Body of pancreas (tissue), 4 donors: ENCODE measurements at regions of chr3 and their contacts with region 1.

Region 1: GRCh38 chr3:150733373-150733935 is 29.5 kb downstream of the SIAH2 start:
- DNase-seq: no peak
- ATAC-seq: no peak
- H3K4me3 ChIP-seq: no peak overlapping the region
- H3K27ac ChIP-seq: no peak overlapping the region
- H3K4me1 ChIP-seq: peaks cover 24% of the 10 kb centered on the region
- H3K27me3 ChIP-seq: no peaks in the 10 kb centered on the region
- CTCF ChIP-seq: no peak
- POLR2A ChIP-seq: no peak

Region 2: DNA sequence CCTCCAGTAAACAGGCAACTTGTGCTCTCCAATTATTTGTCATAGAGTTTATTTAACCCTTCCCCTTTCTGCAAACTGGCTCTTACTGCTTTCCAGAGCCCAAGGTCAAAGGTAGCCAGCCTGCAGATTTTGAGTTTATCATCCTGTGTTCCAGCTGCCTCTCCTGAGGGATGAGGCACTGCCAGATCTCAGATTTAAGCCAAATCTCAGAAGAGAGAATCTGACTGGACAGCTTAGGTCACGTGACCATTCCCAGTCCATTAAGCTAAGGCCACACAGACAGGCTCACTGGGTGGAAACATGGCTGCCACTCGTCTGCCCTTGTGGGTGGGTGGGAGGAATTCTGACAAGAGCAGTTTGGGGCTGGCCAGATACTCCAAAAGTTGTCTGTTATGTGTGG is 38.1 kb after region 1 on chr3:
- intact Hi-C with region 1: loop called (anchors 5 kb)
- DNase-seq: no peak
- ATAC-seq: no peak
- H3K4me3 ChIP-seq: no peak overlapping the region
- H3K27ac ChIP-seq: no peak overlapping the region
- H3K4me1 ChIP-seq: peaks cover 7% of the 10 kb centered on the region
- H3K27me3 ChIP-seq: no peaks in the 10 kb centered on the region
- CTCF ChIP-seq: no peak
- POLR2A ChIP-seq: no peak

Region 3: DNA sequence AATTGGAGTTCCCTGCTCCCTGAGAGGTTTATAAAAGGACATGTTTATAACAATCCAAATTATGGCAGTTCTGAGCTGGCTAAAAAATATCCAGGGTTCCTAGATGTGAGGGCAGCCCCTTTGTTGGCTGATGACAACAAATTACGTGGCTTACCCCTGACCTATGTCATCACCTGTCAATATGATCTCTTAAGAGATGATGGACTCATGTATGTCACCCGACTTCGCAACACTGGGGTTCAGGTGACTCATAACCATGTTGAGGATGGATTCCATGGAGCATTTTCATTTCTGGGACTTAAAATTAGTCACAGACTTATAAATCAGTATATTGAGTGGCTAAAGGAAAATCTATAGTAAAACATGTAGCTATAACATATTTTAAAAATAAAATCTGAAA is 1094.4 kb after region 1 on chr3:
- intact Hi-C with region 1: no loop called
- DNase-seq: no peak
- ATAC-seq: no peak
- H3K4me3 ChIP-seq: no peak overlapping the region
- H3K27ac ChIP-seq: no peak overlapping the region
- H3K4me1 ChIP-seq: no peaks in the 10 kb centered on the region
- H3K27me3 ChIP-seq: no peaks in the 10 kb centered on the region
- CTCF ChIP-seq: no peak
- POLR2A ChIP-seq: no peak